ENCODE measurements at regions of chr2 and their contacts with region 1.

Region 1: DNA sequence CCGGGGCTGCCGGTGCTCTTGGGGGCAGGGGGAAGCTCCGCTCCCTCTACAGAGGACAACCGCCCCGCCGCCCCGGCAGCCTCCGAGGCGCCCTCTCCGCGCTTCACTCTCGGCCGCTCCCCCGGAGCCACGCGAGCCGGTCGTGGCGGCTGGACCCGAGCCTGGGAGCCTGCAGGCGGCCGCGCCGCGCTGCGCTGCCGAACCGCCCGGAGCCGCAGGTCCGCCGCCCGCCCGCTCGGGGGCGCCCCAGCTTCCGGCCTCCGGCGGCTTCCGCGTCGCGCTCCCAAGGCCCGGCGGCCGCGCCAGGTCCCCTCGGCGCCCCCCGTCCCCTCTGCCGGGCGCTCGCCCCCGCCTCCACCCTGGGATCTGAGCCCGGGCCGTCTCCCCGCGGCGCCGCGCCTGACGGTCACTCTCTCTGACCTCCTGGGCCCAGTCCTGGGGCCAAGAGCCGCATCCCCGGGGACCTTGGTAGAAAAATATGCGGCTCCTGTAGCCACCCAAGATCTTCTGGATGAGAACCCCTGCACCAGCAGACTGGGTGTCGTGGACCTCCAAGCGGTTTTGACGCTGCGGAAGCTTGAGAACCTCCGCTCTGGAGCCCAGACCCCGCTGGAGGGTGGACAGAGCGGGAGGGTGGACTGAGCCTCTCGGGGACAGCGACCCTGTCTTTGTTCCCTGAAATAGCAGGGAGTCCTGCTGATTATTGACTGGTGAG is 44.3 kb downstream of the SERTAD2 start:
- DNase-seq: peak; percentile 80 to 88
- ATAC-seq: peak; percentile 90
- H3K4me3 ChIP-seq: peak overlapping the region; percentile 55
- H3K27ac ChIP-seq: peak overlapping the region; percentile 85 to 97
- H3K4me1 ChIP-seq: 0 out of 3 replicates have a peak, but pooled peaks cover 4% of the 10 kb centered on the region
- CTCF ChIP-seq: peak; percentile 92
- EP300 ChIP-seq: no peak
- POLR2A ChIP-seq: peak; percentile 77; the same call in 1 of the 2 replicates
- RAD21 ChIP-seq: peak; percentile 6 to 65; a peak in 3 of 5 replicates

Region 2: GRCh38 chr2:64595397-64596160 is 13.8 kb before region 1 on chr2:
- CTCF ChIA-PET with region 1: interaction called, 69 read pairs
- POLR2A ChIA-PET with region 1: interaction called, 7 read pairs
- DNase-seq: peak in 1 of 2 experiments; percentile 38
- ATAC-seq: peak; percentile 43 to 72; a peak in 3 of 6 replicates
- H3K4me3 ChIP-seq: no peak overlapping the region
- H3K27ac ChIP-seq: no peak overlapping the region
- H3K4me1 ChIP-seq: peaks cover 21% of the 10 kb centered on the region; the same call in 1 of the 3 replicates
- CTCF ChIP-seq: peak; percentile 46
- EP300 ChIP-seq: no peak
- POLR2A ChIP-seq: no peak
- RAD21 ChIP-seq: peak; percentile 55 to 72

Region 3: GRCh38 chr2:64622443-64623241 is 13.3 kb after region 1 on chr2:
- CTCF ChIA-PET with region 1: interaction called, 69 read pairs
- POLR2A ChIA-PET with region 1: interaction called, 9 read pairs
- DNase-seq: no peak
- ATAC-seq: peak in 1 of 2 experiments; percentile 8; a peak in 2 of 6 replicates
- H3K4me3 ChIP-seq: no peak overlapping the region
- H3K27ac ChIP-seq: no peak overlapping the region
- H3K4me1 ChIP-seq: no peaks in the 10 kb centered on the region
- CTCF ChIP-seq: no peak
- EP300 ChIP-seq: no peak
- POLR2A ChIP-seq: no peak
- RAD21 ChIP-seq: no peak

Region 4: DNA sequence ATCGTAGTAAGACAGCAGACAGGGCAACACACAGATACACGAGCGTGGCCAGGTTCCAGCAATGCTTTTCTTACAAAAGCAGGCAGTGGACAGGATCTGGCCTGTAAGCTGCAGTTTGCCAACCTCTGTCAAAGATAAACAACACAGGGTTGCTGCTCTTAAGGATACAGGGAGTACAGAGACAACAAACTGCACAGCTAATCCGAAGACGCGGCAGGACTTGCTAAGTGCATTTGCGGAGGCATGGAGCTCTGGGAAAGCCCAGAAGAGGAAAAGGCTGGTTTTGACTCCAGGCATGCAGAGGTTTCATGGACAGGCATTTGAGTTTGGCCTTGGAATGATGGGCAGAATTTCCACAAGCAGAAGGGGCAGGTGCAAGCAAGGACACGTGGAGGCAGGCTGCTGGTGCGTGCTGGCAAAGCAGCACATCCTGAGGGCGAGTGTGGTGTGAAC is 20.0 kb after region 1 on chr2:
- CTCF ChIA-PET with region 1: interaction called, 49 read pairs
- POLR2A ChIA-PET with region 1: interaction called, 4 read pairs
- DNase-seq: no peak
- ATAC-seq: no peak
- H3K4me3 ChIP-seq: no peak overlapping the region
- H3K27ac ChIP-seq: no peak overlapping the region
- H3K4me1 ChIP-seq: no peaks in the 10 kb centered on the region
- CTCF ChIP-seq: no peak
- EP300 ChIP-seq: no peak
- POLR2A ChIP-seq: no peak
- RAD21 ChIP-seq: no peak

Region 5: GRCh38 chr2:64873472-64873924 is 264.1 kb after region 1 on chr2:
- CTCF ChIA-PET with region 1: interaction called, 34 read pairs
- POLR2A ChIA-PET with region 1: no interaction called
- DNase-seq: peak; percentile 65 to 73
- ATAC-seq: peak; percentile 83 to 94
- H3K4me3 ChIP-seq: no peak overlapping the region
- H3K27ac ChIP-seq: no peak overlapping the region
- H3K4me1 ChIP-seq: peaks cover 15% of the 10 kb centered on the region
- CTCF ChIP-seq: peak; percentile 95
- EP300 ChIP-seq: no peak
- POLR2A ChIP-seq: no peak
- RAD21 ChIP-seq: peak; percentile 94 to 97